ENCODE measurements at regions of chr2 and their contacts with region 1.

Region 1: DNA sequence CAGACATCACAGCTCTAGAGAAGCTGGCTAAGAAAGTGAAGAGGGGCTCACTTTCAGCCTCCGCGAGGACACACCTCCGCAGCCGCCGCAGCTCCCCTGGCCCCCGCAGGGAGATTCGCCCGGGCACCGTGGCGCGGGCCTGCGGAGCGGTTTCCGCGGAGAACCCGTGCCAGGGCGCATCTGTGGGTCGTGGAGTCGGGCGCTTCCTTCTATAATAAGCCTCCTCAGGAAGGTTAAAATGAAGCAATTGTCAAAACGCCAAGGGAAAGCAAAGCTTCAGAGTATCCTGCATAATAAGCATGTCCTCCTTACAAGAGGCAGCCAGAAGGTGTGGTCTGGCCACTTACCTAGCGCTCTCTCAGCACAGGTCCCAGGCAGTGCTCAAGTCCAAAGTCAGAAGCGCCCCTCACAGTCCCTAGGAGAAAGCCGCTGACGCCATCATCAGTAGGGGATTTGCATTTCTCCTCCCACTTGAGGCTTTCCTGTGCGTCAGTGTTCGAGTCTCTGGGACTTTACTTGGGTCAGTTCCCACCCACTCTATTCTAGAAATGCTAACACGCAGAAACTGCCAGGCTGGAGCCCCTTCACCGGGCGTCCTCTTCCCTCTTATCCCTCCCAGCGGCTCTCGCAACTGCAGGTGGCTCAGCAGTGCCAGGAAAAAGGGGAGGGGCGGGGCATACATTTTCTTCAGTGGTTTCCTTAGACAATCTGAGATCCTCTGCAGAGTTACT is at the start of gene STAT4:
- DNase-seq: peak; percentile 52 to 96 (median 72)
- ATAC-seq: peak; percentile 83
- H3K4me3 ChIP-seq: peak within 1 kb of the TSS; percentile 83
- H3K4me3 Mint-ChIP-seq: peak within 1 kb of the TSS; percentile 89
- H3K27ac ChIP-seq: peak within 1 kb of the TSS; percentile 93
- H3K27ac Mint-ChIP-seq: peak within 1 kb of the TSS; percentile 96
- H3K4me1 ChIP-seq: peaks cover 33% of the 10 kb centered on the region
- H3K4me1 Mint-ChIP-seq: peaks cover 50% of the 10 kb centered on the region
- H3K27me3 ChIP-seq: no peaks in the 10 kb centered on the region
- H3K27me3 Mint-ChIP-seq: no peaks in the 10 kb centered on the region
- CTCF ChIP-seq: no peak
- total RNA-seq, gene STAT4: 77.1 to 83.0 TPM

Region 2: GRCh38 chr2:190853531-190854383 is 297.0 kb before region 1 on chr2:
- CTCF ChIA-PET with region 1: no interaction called
- POLR2A ChIA-PET with region 1: no interaction called
- intact Hi-C with region 1: loop called in 1 of 2 experiments (anchors 10 kb)
- DNase-seq: peak in 2 of 14 experiments; percentile 15
- ATAC-seq: no peak
- H3K4me3 ChIP-seq: no peak overlapping the region
- H3K4me3 Mint-ChIP-seq: no peak overlapping the region
- H3K27ac ChIP-seq: no peak overlapping the region
- H3K27ac Mint-ChIP-seq: no peak overlapping the region
- H3K4me1 ChIP-seq: peaks cover 3% of the 10 kb centered on the region
- H3K4me1 Mint-ChIP-seq: no peaks in the 10 kb centered on the region
- H3K27me3 ChIP-seq: no peaks in the 10 kb centered on the region
- H3K27me3 Mint-ChIP-seq: no peaks in the 10 kb centered on the region
- CTCF ChIP-seq: no peak

Region 3: DNA sequence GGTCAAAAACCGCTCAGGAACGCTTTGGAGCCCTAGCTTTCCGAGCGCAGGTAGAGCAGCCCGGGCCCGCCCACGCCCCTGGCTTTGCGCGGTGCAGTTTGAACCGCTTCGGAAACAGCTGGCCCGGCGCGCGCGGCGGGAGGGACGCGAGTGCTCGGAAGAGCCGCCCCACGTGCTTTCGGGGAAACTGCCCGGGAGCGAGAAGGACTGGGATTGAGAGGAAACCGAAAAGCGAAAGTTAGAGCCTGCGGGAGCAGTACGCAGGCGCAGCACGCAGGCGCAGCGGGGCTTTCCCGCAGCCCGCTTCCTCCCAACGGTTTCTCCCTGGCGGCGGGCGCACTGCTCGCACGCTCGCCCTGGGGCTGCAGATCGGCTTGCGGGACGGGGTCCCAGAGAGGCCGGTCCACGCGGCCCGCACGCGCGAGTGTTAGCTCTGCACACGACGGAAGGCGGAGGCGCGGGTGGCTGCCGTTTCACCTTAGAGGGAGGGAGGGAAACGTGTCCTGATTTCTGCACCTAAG is 130.5 kb before region 1 on chr2:
- CTCF ChIA-PET with region 1: interaction called, 3 read pairs
- POLR2A ChIA-PET with region 1: interaction called, 18 read pairs
- intact Hi-C with region 1: no loop called
- DNase-seq: peak; percentile 84 to 98 (median 92)
- ATAC-seq: peak; percentile 73
- H3K4me3 ChIP-seq: peak overlapping the region; percentile 82
- H3K4me3 Mint-ChIP-seq: no peak overlapping the region
- H3K27ac ChIP-seq: peak overlapping the region; percentile 84 to 87
- H3K27ac Mint-ChIP-seq: no peak overlapping the region
- H3K4me1 ChIP-seq: peaks cover 54% of the 10 kb centered on the region
- H3K4me1 Mint-ChIP-seq: peaks cover 32% of the 10 kb centered on the region
- H3K27me3 ChIP-seq: no peaks in the 10 kb centered on the region
- H3K27me3 Mint-ChIP-seq: no peaks in the 10 kb centered on the region
- CTCF ChIP-seq: no peak

Region 4: GRCh38 chr2:191051825-191052778 is 98.7 kb before region 1 on chr2:
- CTCF ChIA-PET with region 1: interaction called, 157 read pairs
- POLR2A ChIA-PET with region 1: interaction called, 47 read pairs
- intact Hi-C with region 1: loop called (anchors 1 kb)
- DNase-seq: peak in 4 of 14 experiments; percentile 37 to 78 (median 76)
- ATAC-seq: peak; percentile 75
- H3K4me3 ChIP-seq: no peak overlapping the region
- H3K4me3 Mint-ChIP-seq: no peak overlapping the region
- H3K27ac ChIP-seq: no peak overlapping the region
- H3K27ac Mint-ChIP-seq: no peak overlapping the region
- H3K4me1 ChIP-seq: peaks cover 16% of the 10 kb centered on the region
- H3K4me1 Mint-ChIP-seq: peaks cover 22% of the 10 kb centered on the region
- H3K27me3 ChIP-seq: no peaks in the 10 kb centered on the region
- H3K27me3 Mint-ChIP-seq: no peaks in the 10 kb centered on the region
- CTCF ChIP-seq: peak; percentile 92

Region 5: GRCh38 chr2:191114403-191114886 is 36.3 kb before region 1 on chr2:
- CTCF ChIA-PET with region 1: interaction called, 5 read pairs
- POLR2A ChIA-PET with region 1: interaction called, 21 read pairs
- intact Hi-C with region 1: loop called in 1 of 2 experiments (anchors 5 kb)
- DNase-seq: peak in 5 of 14 experiments; percentile 12 to 88 (median 61)
- ATAC-seq: peak; percentile 61
- H3K4me3 ChIP-seq: no peak overlapping the region
- H3K4me3 Mint-ChIP-seq: peak overlapping the region; percentile 31
- H3K27ac ChIP-seq: peak overlapping the region in 1 of 2 donors; percentile 64
- H3K27ac Mint-ChIP-seq: peak overlapping the region; percentile 83
- H3K4me1 ChIP-seq: peaks cover 26% of the 10 kb centered on the region
- H3K4me1 Mint-ChIP-seq: peaks cover 50% of the 10 kb centered on the region
- H3K27me3 ChIP-seq: no peaks in the 10 kb centered on the region
- H3K27me3 Mint-ChIP-seq: no peaks in the 10 kb centered on the region
- CTCF ChIP-seq: no peak

Region 6: DNA sequence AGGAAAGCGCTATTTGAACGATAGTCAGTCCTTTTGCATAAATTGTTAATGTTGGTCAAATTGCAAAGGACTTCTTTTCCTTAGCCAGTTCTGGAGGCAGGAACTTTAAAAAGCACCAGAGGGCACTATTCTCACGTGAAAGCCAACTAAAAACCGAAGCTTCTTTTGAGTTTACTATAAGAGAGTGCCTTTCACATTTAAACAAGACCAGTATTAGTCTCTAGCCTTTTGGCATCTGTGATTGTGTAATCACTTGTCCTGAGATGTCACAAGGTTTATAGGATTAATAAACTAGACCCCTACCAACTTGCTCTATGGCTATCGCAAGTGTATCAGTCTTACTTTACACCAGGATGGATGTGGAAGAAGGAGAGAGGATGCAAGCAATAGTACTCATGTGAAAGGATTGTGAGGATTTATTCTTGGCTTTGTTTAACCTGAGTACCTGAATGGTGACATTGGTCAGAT is 14.4 kb after region 1 on chr2:
- CTCF ChIA-PET with region 1: interaction called, 13 read pairs
- POLR2A ChIA-PET with region 1: interaction called, 3 read pairs
- intact Hi-C with region 1: no loop called
- DNase-seq: peak in 6 of 14 experiments; percentile 18 to 73 (median 52)
- ATAC-seq: peak; percentile 75
- H3K4me3 ChIP-seq: no peak overlapping the region
- H3K4me3 Mint-ChIP-seq: no peak overlapping the region
- H3K27ac ChIP-seq: no peak overlapping the region
- H3K27ac Mint-ChIP-seq: no peak overlapping the region
- H3K4me1 ChIP-seq: no peaks in the 10 kb centered on the region
- H3K4me1 Mint-ChIP-seq: peaks cover 6% of the 10 kb centered on the region
- H3K27me3 ChIP-seq: no peaks in the 10 kb centered on the region
- H3K27me3 Mint-ChIP-seq: no peaks in the 10 kb centered on the region
- CTCF ChIP-seq: peak; percentile 85

Measured in CD4-positive, alpha-beta T cell (primary cell).